Activated B cell treated with CpG ODN at 0.5 μM for 24 hours (primary cell): ENCODE measurements at regions of chr10 and their contacts with region 1.

Region 1: GRCh38 chr10:95693668-95694534 is at the start of gene TCTN3:
- DNase-seq: peak; percentile 87
- ATAC-seq: peak; percentile 94
- H3K4me3 Mint-ChIP-seq: peak within 1 kb of the TSS; percentile 98
- H3K27ac Mint-ChIP-seq: peak within 1 kb of the TSS; percentile 94
- H3K4me1 Mint-ChIP-seq: peaks cover 77% of the 10 kb centered on the region
- H3K27me3 Mint-ChIP-seq: no peaks in the 10 kb centered on the region
- CTCF ChIP-seq: peak; percentile 70
- total RNA-seq, gene TCTN3: 44.5 and 47.5 TPM in 2 replicates

Region 2: GRCh38 chr10:95467162-95467599 is 226.7 kb before region 1 on chr10:
- CTCF ChIA-PET with region 1: no interaction called
- POLR2A ChIA-PET with region 1: no interaction called
- intact Hi-C with region 1: no loop called
- DNase-seq: no peak
- ATAC-seq: no peak
- H3K4me3 Mint-ChIP-seq: no peak overlapping the region
- H3K27ac Mint-ChIP-seq: no peak overlapping the region
- H3K4me1 Mint-ChIP-seq: no peaks in the 10 kb centered on the region
- H3K27me3 Mint-ChIP-seq: peaks cover 20% of the 10 kb centered on the region
- CTCF ChIP-seq: no peak

Region 3: DNA sequence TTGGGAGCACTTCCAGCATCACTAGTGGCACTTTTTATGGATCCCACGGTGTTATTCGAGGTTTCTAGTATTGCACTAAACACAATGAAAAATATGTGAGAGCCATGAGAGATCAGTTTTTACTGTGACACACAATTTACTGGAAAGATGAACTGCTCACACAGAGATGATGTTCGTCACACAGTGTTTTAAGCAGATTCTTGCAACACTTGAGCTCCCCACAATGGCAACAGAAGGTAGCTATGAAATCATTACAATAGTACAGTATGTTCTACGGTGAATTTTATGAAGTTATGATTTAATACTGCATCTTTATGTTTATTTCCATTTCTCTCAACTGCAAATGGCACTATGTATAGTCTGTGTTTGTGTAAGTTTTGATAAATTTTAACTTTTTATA is 34.6 kb after region 1 on chr10:
- CTCF ChIA-PET with region 1: interaction called, 58 read pairs
- POLR2A ChIA-PET with region 1: interaction called, 12 read pairs
- intact Hi-C with region 1: loop called (anchors 1 kb)
- DNase-seq: no peak
- ATAC-seq: no peak
- H3K4me3 Mint-ChIP-seq: no peak overlapping the region
- H3K27ac Mint-ChIP-seq: no peak overlapping the region
- H3K4me1 Mint-ChIP-seq: peaks cover 34% of the 10 kb centered on the region
- H3K27me3 Mint-ChIP-seq: no peaks in the 10 kb centered on the region
- CTCF ChIP-seq: no peak

Region 4: GRCh38 chr10:95783741-95784140 is 89.8 kb after region 1 on chr10:
- CTCF ChIA-PET with region 1: interaction called, 38 read pairs
- POLR2A ChIA-PET with region 1: interaction called, 43 read pairs
- intact Hi-C with region 1: loop called (anchors 1 kb)
- DNase-seq: no peak
- ATAC-seq: peak; percentile 55
- H3K4me3 Mint-ChIP-seq: peak overlapping the region; percentile 53
- H3K27ac Mint-ChIP-seq: peak overlapping the region; percentile 99
- H3K4me1 Mint-ChIP-seq: peaks cover 95% of the 10 kb centered on the region
- H3K27me3 Mint-ChIP-seq: no peaks in the 10 kb centered on the region
- CTCF ChIP-seq: no peak

Region 5: DNA sequence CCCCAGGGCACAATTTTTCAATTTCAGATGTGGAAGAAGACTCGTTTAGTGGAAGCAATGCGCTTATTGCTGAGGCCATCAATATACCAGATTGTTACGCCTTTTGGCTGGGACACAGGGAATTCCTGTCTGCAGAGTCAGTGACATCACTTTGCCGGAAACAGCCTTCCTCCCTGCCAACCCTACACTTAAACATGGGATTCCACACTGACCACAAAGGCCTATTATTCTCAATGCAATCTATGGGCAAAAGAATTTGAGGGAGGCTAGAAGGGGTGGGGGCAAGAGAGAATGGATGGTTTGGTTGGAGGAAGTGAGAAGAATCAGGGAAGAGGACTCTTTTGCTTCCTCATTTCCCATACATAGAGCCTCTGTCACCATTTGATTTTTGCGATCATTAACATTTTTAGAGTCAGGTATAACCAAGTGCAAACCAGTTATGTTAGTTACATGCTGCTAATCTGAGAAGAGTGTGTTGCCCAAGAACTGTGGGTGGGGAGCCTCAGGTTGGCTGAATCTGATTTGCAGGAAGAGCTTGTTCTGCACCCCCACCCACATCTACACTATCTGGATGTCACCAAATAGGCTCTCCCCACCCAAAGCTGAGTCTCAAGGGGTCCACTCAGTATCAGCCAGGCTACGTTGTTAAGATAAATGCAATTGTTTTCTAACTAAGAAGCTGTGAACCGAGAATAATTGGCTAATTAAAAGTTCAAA is 120.3 kb after region 1 on chr10:
- CTCF ChIA-PET with region 1: interaction called, 38 read pairs
- POLR2A ChIA-PET with region 1: interaction called, 24 read pairs
- intact Hi-C with region 1: no loop called
- DNase-seq: no peak
- ATAC-seq: no peak
- H3K4me3 Mint-ChIP-seq: peak overlapping the region; percentile 37
- H3K27ac Mint-ChIP-seq: peak overlapping the region; percentile 67
- H3K4me1 Mint-ChIP-seq: peaks cover 79% of the 10 kb centered on the region
- H3K27me3 Mint-ChIP-seq: no peaks in the 10 kb centered on the region
- CTCF ChIP-seq: no peak

Region 6: DNA sequence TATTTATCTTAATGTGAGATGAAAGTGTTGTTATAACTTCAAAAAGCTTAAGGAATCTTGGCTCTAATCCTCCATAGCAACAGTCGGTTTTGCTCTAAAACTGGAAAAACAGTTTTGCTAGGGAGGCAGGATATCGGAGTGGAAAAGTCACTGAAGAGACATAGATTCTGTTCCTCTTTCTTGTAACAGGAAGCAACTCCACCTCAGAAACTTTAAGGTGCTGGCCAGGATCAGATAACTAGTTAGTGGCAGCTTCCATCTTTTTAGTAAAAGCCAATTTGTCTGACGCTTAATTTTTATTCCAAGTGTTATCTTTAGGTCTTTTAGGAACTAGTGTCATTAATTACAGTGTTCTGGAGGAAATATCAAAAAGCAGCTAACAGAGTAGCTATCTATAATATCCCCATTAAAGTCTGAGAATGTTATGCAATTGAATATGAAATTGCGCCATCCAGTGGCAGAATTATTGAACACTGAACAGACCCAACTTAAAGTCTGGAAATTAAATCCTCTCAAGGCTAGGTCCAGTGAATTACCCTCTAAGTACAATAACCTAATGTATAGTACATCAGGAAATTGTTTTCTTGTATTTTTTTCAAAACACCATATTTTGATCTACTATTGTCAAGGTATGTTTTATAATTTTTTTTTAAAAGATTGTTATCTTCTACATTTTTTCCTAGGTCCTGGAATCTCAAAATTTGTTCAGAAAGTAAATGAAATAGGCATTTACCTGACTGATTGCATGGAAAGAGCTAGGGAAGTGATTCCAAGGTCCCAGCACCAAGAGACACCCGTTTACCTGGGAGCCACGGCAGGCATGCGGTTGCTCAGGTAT is 148.0 kb after region 1 on chr10:
- CTCF ChIA-PET with region 1: interaction called, 427 read pairs
- POLR2A ChIA-PET with region 1: interaction called, 237 read pairs
- intact Hi-C with region 1: loop called (anchors 1 kb)
- DNase-seq: no peak
- ATAC-seq: peak; percentile 41
- H3K4me3 Mint-ChIP-seq: peak overlapping the region; percentile 66
- H3K27ac Mint-ChIP-seq: peak overlapping the region; percentile 95
- H3K4me1 Mint-ChIP-seq: peaks cover 54% of the 10 kb centered on the region
- H3K27me3 Mint-ChIP-seq: no peaks in the 10 kb centered on the region
- CTCF ChIP-seq: no peak

Region 7: DNA sequence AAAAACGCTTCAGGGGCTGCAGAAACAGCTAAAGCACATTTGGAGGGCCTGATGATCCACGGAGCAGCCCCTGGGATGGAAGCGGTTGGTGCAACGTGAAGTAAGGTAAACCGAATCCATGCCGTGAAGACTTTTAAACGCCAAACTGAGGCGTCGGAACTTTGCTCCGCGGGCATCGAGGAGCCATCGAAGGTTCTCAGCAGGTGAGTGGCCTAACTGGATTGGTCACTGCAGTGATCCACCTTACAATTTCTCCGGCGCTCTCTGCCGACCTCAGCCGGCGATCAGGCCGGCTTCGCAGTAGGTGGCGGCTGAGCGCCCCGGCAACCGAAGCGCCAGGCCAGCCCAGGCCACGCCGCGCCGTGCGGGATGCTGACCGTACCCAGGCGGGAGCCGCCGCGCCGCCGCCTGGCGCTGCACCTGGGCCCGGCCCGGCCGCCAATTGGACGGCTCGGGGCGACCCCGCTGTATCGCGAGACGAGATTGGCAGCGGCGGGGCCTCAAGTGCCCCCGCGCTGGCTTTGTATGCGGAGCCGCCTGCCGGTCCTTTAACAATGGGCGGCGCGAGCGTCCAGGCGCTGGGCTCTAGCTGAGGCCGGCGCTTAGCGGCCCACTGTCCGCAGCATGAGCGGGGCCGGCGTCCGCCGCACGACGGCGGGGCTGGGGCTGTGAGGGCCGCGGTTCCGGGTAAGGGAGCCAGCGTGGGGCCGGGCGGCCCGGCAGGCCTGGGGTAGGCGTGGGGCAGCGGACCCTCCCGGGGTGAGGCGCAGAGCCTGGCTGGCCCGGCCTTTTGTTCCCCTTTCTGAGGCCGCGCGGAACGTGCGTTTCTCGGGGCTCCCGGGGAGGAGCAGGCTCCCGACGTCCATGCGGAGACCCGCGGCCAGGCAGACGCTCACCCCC is 349.4 kb after region 1 on chr10 and contains the start of gene CCNJ:
- CTCF ChIA-PET with region 1: no interaction called
- POLR2A ChIA-PET with region 1: interaction called, 3 read pairs
- intact Hi-C with region 1: loop called (anchors 5 kb)
- DNase-seq: peak; percentile 83
- ATAC-seq: peak; percentile 88
- H3K4me3 Mint-ChIP-seq: peak within 1 kb of the TSS; percentile 93
- H3K27ac Mint-ChIP-seq: peak within 1 kb of the TSS; percentile 80
- H3K4me1 Mint-ChIP-seq: peaks cover 41% of the 10 kb centered on the region
- H3K27me3 Mint-ChIP-seq: no peaks in the 10 kb centered on the region
- CTCF ChIP-seq: no peak
- total RNA-seq, gene CCNJ: 9.8 and 10.2 TPM in 2 replicates

Region 8: DNA sequence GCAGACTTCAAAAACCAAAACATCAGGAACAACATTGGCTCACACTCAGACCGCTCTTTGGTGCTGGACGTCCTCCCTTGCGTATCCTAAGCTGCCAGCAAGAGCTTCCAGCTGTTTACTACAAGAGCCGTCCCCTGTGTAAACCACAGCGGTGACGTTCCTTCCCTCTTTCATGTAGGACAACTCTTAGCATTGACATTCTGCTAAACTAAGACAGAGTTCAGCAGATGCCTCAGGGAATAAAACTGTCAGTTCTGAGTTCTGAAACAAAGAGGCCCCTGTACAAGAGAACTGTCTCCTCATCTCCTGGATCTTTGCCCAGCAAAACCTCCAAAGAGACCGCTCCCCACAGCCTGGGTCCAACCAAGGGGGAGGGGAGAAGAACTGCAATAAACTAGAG is 722.7 kb after region 1 on chr10:
- CTCF ChIA-PET with region 1: no interaction called
- POLR2A ChIA-PET with region 1: no interaction called
- intact Hi-C with region 1: no loop called
- DNase-seq: no peak
- ATAC-seq: no peak
- H3K4me3 Mint-ChIP-seq: no peak overlapping the region
- H3K27ac Mint-ChIP-seq: no peak overlapping the region
- H3K4me1 Mint-ChIP-seq: no peaks in the 10 kb centered on the region
- H3K27me3 Mint-ChIP-seq: peaks cover 9% of the 10 kb centered on the region
- CTCF ChIP-seq: no peak